Activated B cell treated with CpG ODN at 0.5 μM for 24 hours (primary cell): ENCODE measurements at regions of chr18 and their contacts with region 1.

Region 1: GRCh38 chr18:36047521-36047920 is 19.8 kb downstream of the RPRD1A start:
- DNase-seq: no peak
- ATAC-seq: peak; percentile 45
- H3K4me3 Mint-ChIP-seq: no peak overlapping the region
- H3K27ac Mint-ChIP-seq: peak overlapping the region; percentile 60
- H3K4me1 Mint-ChIP-seq: peaks cover 66% of the 10 kb centered on the region
- H3K27me3 Mint-ChIP-seq: no peaks in the 10 kb centered on the region
- CTCF ChIP-seq: no peak

Region 2: DNA sequence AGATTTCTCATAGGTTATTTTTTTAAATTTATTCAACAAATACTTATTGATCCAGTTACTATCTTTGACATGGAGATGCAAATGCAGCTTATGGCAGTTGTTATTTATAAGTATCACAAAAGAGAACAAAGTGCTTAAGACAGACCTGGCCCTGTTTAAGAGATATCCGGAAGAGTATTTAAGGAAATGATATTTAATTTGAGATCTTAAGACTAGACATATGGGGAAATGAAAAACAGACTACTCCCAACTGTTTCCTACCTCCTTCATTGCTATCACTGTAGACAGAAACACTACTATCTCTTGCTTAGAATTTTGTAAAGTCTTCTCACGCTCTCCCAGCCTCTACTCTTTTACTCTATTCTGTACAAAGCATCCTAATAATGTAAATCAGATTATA is 16.1 kb before region 1 on chr18:
- CTCF ChIA-PET with region 1: no interaction called
- POLR2A ChIA-PET with region 1: interaction called, 3 read pairs
- intact Hi-C with region 1: loop called (anchors 2 kb)
- DNase-seq: no peak
- ATAC-seq: peak; percentile 62
- H3K4me3 Mint-ChIP-seq: peak overlapping the region; percentile 48
- H3K27ac Mint-ChIP-seq: peak overlapping the region; percentile 72
- H3K4me1 Mint-ChIP-seq: peaks cover 49% of the 10 kb centered on the region
- H3K27me3 Mint-ChIP-seq: no peaks in the 10 kb centered on the region
- CTCF ChIP-seq: no peak